ENCODE measurements at regions of chr11 and their contacts with region 1.

Region 1: DNA sequence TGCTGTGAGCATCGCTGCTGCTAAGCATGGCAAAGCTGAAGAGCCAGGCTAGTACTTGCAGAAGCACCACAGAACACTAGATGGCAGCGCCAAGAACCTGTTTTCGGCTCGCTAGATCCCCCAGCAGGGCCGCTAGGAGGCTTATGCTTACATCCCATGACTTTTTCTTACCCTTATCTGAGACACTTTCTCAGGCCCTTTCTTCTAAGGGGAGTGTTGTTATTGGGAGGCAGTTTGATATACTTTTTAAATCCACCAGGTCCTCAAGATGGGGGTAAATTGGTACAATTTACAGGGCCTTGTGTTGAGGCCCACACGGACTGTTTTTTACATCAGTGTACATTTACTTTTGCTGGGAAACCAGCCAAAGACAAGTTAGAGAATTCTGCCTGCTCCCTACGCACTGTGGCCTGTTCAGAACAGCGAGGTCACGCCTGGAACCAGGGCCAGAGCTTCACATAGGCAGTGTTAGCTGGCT is 4.0 kb downstream of the TRIM6 start:
- DNase-seq: peak; percentile 17 to 61 (median 49)
- ATAC-seq: peak; percentile 91
- H3K4me3 ChIP-seq: no peak overlapping the region
- H3K4me3 Mint-ChIP-seq: no peak overlapping the region
- H3K27ac ChIP-seq: no peak overlapping the region
- H3K27ac Mint-ChIP-seq: no peak overlapping the region
- H3K4me1 ChIP-seq: no peaks in the 10 kb centered on the region
- H3K4me1 Mint-ChIP-seq: peaks cover 4 to 15% (median 9%) of the 10 kb centered on the region in 7 donors
- H3K27me3 ChIP-seq: no peaks in the 10 kb centered on the region
- H3K27me3 Mint-ChIP-seq: peaks cover 0 to 20% (median 17%) of the 10 kb centered on the region in 5 donors

Region 2: DNA sequence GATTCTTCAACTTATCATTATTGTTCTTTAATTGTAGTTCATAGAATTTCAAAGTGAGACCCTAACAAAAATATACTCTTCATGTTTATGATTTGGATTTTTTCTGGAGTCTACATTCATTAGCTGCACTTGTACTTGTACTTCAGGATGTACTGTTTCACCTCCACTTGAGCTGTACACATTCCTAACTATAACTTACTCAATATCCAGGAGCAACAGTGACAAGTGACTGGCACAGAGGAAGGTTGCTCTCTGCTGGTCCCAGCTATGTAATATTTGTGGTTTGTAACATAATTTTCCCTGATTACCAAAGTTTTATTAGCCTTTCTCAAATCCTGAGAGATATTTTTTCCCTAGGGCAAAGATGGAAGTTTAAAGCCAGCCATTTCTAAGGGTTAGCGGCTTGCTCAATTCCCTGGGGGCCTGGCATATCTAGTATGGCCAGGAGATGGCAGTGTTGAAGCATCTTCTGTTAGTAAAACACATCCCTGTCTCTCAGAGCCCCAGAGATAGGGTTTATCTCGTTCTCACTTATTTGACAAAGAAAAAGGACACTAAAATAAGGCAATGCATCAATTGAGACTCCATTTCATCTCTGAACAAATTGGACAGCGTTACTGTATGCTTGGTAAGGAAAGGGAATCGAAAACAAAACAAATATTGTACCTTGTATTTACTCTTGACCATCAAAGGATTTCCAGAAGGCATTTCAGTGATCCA is 476.5 kb before region 1 on chr11:
- CTCF ChIA-PET with region 1: no interaction called
- POLR2A ChIA-PET with region 1: no interaction called
- intact Hi-C with region 1: loop called in 1 of 2 experiments (anchors 5 kb)
- DNase-seq: peak in 8 of 9 donors; percentile 8 to 46 (median 28)
- ATAC-seq: peak; percentile 67
- H3K4me3 ChIP-seq: no peak overlapping the region
- H3K4me3 Mint-ChIP-seq: no peak overlapping the region
- H3K27ac ChIP-seq: no peak overlapping the region
- H3K27ac Mint-ChIP-seq: no peak overlapping the region
- H3K4me1 ChIP-seq: no peaks in the 10 kb centered on the region
- H3K4me1 Mint-ChIP-seq: peaks cover 0 to 2% (median 0%) of the 10 kb centered on the region in 7 donors
- H3K27me3 ChIP-seq: no peaks in the 10 kb centered on the region
- H3K27me3 Mint-ChIP-seq: peaks cover 9 to 24% (median 16%) of the 10 kb centered on the region in 5 donors

Region 3: DNA sequence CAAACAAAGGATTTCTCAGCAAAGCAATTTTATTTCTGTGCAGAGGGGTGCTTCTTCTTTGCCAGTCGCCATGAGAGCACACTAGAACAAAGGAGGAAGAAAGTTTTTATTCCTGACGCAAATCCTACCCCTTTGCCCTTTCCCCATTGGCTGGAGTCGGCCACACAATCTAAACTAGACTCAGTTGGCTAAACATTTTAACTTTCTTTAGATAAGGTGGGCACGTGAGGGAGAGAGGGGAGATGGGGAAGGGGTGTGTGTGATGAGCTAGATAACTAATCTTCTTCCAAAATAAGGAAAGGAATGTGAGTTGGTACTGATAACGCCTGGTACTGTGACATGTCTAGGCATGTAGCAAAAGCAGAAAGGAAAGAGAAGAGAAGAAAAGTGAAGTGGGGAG is 89.8 kb after region 1 on chr11:
- CTCF ChIA-PET with region 1: interaction called, 5 read pairs
- POLR2A ChIA-PET with region 1: no interaction called
- intact Hi-C with region 1: loop called in 1 of 2 experiments (anchors 5 kb)
- DNase-seq: no peak
- ATAC-seq: no peak
- H3K4me3 ChIP-seq: peak overlapping the region; percentile 81
- H3K4me3 Mint-ChIP-seq: peak overlapping the region; percentile 93 to 100 (median 98)
- H3K27ac ChIP-seq: peak overlapping the region; percentile 93
- H3K27ac Mint-ChIP-seq: peak overlapping the region; percentile 95 to 100 (median 97)
- H3K4me1 ChIP-seq: peaks cover 29 to 40% of the 10 kb centered on the region in 2 donors
- H3K4me1 Mint-ChIP-seq: peaks cover 38 to 68% (median 57%) of the 10 kb centered on the region in 7 donors
- H3K27me3 ChIP-seq: no peaks in the 10 kb centered on the region
- H3K27me3 Mint-ChIP-seq: no peaks in the 10 kb centered on the region

Region 4: GRCh38 chr11:5712507-5712906 is 112.1 kb after region 1 on chr11:
- CTCF ChIA-PET with region 1: interaction called, 3 read pairs
- POLR2A ChIA-PET with region 1: no interaction called
- intact Hi-C with region 1: loop called (anchors 1 to 2 kb)
- DNase-seq: peak in 3 of 9 donors; percentile 8 to 33 (median 22)
- ATAC-seq: peak; percentile 42
- H3K4me3 ChIP-seq: no peak overlapping the region
- H3K4me3 Mint-ChIP-seq: no peak overlapping the region
- H3K27ac ChIP-seq: no peak overlapping the region
- H3K27ac Mint-ChIP-seq: peak overlapping the region in 7 of 9 donors; percentile 6 to 83 (median 19)
- H3K4me1 ChIP-seq: no peaks in the 10 kb centered on the region
- H3K4me1 Mint-ChIP-seq: peaks cover 0 to 13% (median 4%) of the 10 kb centered on the region in 7 donors
- H3K27me3 ChIP-seq: no peaks in the 10 kb centered on the region
- H3K27me3 Mint-ChIP-seq: no peaks in the 10 kb centered on the region

Region 5: DNA sequence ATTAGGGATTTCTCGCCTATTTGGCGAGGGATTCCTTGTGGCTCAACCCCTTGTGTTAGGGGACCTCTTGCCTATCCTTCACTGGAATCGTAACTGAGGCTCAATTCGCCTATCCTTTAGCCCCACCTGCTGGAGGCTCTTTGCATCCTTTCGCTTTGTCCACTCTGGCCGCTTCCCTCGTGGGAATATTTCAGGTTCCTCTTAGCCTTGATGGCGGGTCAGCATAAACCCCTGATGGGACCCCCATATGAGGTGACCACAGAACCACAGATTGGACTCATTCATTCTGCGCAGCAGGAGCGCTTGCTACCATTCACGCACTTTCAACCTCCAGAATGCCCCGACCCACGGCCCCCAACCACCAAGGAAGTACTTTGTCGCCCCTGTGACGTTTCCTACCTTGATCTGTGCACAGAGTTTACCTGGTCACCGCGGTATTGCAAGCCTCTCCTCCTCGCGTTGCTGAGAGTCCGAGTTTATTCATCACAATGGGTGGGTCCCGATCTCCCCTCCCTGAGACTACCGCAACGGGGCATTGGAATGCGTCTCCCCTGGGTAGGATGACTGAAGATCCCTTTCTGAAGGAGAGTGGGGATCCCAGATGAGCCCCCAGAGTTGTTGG is 208.2 kb after region 1 on chr11 and contains the start of gene OR52N2:
- CTCF ChIA-PET with region 1: interaction called, 11 read pairs
- POLR2A ChIA-PET with region 1: no interaction called
- intact Hi-C with region 1: loop called (anchors 1 kb)
- DNase-seq: peak; percentile 38 to 73 (median 66)
- ATAC-seq: peak; percentile 92
- H3K4me3 ChIP-seq: peak within 1 kb of the TSS; percentile 61
- H3K4me3 Mint-ChIP-seq: peak within 1 kb of the TSS; percentile 86 to 95 (median 90)
- H3K27ac ChIP-seq: no peak within 1 kb of the TSS
- H3K27ac Mint-ChIP-seq: peak within 1 kb of the TSS in 8 of 9 donors; percentile 1 to 87 (median 20)
- H3K4me1 ChIP-seq: no peaks in the 10 kb centered on the region
- H3K4me1 Mint-ChIP-seq: peaks cover 7 to 16% (median 10%) of the 10 kb centered on the region in 7 donors
- H3K27me3 ChIP-seq: peaks cover 0 to 6% of the 10 kb centered on the region in 2 donors
- H3K27me3 Mint-ChIP-seq: peaks cover 12 to 29% (median 25%) of the 10 kb centered on the region in 5 donors
- total RNA-seq, gene OR52N2: not detected

Region 6: DNA sequence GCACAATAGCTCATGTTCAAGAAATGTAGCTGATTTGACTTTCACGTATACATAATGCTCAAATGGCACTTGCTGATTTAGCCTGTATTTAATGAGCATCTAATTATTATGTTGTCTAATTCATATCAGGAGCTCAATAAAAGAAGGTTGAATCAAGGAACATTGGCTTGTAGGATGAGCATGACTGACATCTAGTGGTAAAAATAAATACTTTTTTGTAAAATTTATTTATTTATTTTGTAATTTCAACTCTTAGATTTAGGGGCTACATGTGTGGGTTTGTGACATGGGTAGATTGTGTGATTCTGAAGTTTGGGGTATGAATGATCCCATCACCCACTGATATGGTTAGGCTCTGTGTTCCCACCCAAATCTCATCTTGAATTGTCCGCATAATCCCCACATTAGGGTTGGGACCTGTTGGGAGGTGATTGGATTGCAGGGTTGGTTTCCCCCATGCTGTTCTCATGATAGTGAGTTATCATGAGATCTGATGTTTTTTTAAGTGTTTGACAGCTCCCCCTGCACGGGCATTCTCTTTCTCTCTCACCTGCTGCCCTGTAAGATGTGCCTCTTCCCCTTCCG is 290.9 kb after region 1 on chr11:
- CTCF ChIA-PET with region 1: no interaction called
- POLR2A ChIA-PET with region 1: no interaction called
- intact Hi-C with region 1: loop called (anchors 2 kb)
- DNase-seq: peak in 3 of 9 donors; percentile 0 to 10 (median 1)
- ATAC-seq: no peak
- H3K4me3 ChIP-seq: no peak overlapping the region
- H3K4me3 Mint-ChIP-seq: no peak overlapping the region
- H3K27ac ChIP-seq: no peak overlapping the region
- H3K27ac Mint-ChIP-seq: no peak overlapping the region
- H3K4me1 ChIP-seq: no peaks in the 10 kb centered on the region
- H3K4me1 Mint-ChIP-seq: no peaks in the 10 kb centered on the region
- H3K27me3 ChIP-seq: peaks cover 5% of the 10 kb centered on the region in 2 donors
- H3K27me3 Mint-ChIP-seq: peaks cover 7 to 27% (median 20%) of the 10 kb centered on the region in 5 donors